Activated naive CD4-positive, alpha-beta T cell treated with anti-CD3 and anti-CD28 coated beads, Interleukin-2, amount 10 ng/mL, durations not matched to agents 7 days and 5 days (primary cell): ENCODE measurements at regions of chr15 and their contacts with region 1.

Region 1: DNA sequence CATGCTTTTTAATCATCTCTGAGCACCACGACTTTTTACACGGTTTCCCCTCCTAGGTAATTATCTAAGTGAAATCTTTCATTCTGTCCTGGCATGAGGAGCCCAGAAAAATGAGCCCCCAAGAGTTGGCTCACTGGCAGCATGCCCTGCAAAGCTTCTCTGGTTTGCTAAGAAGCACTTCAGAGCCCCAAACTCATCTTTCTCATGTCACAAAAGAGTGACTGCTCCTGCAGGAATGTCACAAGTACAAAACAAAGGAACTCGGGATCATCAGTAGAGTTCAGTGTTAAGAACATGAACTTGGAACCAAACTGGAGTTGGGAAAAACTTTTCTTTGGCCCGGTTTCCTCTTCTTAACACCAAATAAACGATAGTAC is 123.9 kb downstream of the FOXB1 start:
- DNase-seq: no peak
- H3K4me3 Mint-ChIP-seq: peak overlapping the region; percentile 78
- H3K27ac Mint-ChIP-seq: peak overlapping the region; percentile 95
- H3K4me1 Mint-ChIP-seq: peaks cover 59% of the 10 kb centered on the region
- H3K27me3 Mint-ChIP-seq: peaks cover 10% of the 10 kb centered on the region

Region 2: GRCh38 chr15:60004009-60004851 is 123.8 kb before region 1 on chr15 and contains the start of gene FOXB1:
- CTCF ChIA-PET with region 1: interaction called, 13 read pairs
- DNase-seq: peak; percentile 55
- H3K4me3 Mint-ChIP-seq: peak within 1 kb of the TSS; percentile 94
- H3K27ac Mint-ChIP-seq: peak within 1 kb of the TSS; percentile 94
- H3K4me1 Mint-ChIP-seq: peaks cover 76% of the 10 kb centered on the region
- H3K27me3 Mint-ChIP-seq: peaks cover 94% of the 10 kb centered on the region